ENCODE measurements at regions of chr14 and their contacts with region 1.

Region 1: DNA sequence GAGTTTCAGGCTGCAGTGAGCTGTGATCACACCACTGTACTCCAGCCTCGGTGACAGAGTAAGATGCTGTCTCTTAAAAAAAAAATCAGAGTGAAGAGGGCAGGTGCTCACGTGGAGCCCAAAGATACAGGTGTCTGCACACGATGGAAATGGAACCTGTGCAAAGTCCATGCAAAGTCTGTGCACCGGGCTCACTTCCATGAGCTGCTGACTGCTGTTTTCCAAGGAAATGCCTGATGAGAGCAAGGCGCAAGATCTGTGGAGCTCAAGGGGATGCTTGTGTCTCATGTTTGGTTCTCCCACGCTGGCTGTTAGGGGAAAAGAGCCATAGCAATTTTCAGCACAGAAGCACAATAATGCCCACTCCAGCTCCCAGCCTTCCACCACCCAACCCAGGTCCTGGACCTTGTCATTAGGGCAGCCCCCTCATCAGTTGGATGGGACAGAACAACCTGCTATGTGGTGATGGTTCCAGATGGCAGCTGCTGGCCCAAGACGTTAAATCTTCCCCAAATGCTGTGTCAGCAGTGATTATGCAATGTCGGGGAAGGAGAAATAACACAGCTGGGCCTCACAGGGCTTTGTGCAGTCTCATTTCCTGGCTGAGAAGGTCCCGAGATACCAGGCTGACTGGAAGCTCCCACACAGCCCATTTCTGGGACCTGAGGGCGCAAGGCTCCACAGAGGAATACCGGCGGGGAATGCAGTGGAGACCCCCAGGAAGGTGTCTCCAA is 27.9 kb upstream of the DICER1 start:
- DNase-seq: peak; percentile 80 to 95 (median 95)
- H3K4me3 ChIP-seq: peak overlapping the region in 6 of 7 experiments; percentile 33 to 73 (median 50)
- H3K27ac ChIP-seq: peak overlapping the region; percentile 73 to 85
- H3K4me1 ChIP-seq: peaks cover 14 to 45% (median 41%) of the 10 kb centered on the region in 4 experiments
- H3K27me3 ChIP-seq: no peaks in the 10 kb centered on the region

Region 2: GRCh38 chr14:95174184-95174792 is 10.9 kb before region 1 on chr14:
- CTCF ChIA-PET with region 1: interaction called, 27 read pairs
- POLR2A ChIA-PET with region 1: interaction called, 3 read pairs
- DNase-seq: peak in 1 of 3 donors; percentile 48
- H3K4me3 ChIP-seq: no peak overlapping the region
- H3K27ac ChIP-seq: no peak overlapping the region
- H3K4me1 ChIP-seq: peaks cover 0 to 11% (median 4%) of the 10 kb centered on the region in 4 experiments
- H3K27me3 ChIP-seq: no peaks in the 10 kb centered on the region

Region 3: DNA sequence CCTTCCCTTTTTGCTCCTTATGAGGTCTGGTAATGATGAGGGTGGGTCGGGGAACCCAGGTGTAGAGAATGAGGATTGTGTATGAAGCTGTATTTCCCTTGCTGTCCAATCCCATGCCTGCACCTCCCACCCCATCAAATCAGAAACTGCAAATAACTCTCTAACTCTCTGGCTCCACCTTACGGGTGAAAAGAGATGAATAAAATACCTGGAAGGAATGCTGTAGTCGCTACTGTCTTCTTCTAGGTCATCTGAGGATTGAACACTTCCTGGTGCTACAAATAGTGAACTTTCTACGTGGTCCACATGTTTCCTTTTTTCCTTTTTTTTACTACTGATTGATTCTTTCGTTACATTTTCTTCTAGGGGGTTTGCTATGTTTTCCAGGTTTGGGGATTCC is 11.1 kb after region 1 on chr14:
- CTCF ChIA-PET with region 1: interaction called, 26 read pairs
- POLR2A ChIA-PET with region 1: no interaction called
- DNase-seq: peak; percentile 60 to 71 (median 69)
- H3K4me3 ChIP-seq: no peak overlapping the region
- H3K27ac ChIP-seq: no peak overlapping the region
- H3K4me1 ChIP-seq: peaks cover 0 to 10% (median 8%) of the 10 kb centered on the region in 4 experiments
- H3K27me3 ChIP-seq: no peaks in the 10 kb centered on the region

Measured in common myeloid progenitor, CD34-positive (primary cell).